ENCODE measurements at regions of chr3 and their contacts with region 1.

Region 1: DNA sequence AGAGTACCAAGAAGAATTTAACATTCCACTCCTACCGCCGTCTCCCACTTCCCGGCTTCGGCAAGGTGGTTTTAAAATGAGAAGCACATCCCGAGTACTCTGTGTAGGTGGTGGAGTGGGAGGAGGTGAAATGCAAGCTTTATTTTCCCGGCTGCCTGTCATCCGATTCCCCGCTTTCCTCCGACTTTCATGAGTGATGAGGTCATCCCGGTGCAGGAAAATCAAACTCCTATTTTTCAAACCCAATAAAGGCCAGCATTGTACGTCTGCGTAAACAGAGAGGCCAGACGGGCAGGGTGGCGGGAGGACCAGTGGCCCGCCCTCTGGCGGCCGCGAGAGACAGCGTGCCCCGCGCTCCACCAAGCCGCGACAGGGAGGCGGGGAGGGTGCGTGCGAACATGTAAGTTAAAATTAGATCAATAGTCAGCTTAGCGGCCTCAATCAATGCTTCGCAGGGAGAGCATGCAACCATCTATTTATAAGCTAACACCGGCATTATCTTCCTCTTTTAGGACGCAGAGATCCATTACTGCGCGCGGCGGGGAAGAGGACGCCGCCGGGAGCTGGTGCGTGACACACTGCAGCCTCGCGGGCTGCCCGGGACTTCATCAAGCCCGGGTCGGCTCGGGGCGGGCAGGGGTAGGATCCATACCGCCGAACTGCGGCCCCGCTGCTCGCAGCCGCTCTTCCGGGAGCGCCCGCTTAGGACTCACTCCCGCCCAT is 163.3 kb downstream of the CD47 start:
- H3K4me3 Mint-ChIP-seq: peak overlapping the region; percentile 81
- H3K27ac Mint-ChIP-seq: peak overlapping the region; percentile 81
- H3K4me1 Mint-ChIP-seq: peaks cover 16% of the 10 kb centered on the region
- H3K27me3 Mint-ChIP-seq: peaks cover 12% of the 10 kb centered on the region

Region 2: GRCh38 chr3:107753480-107753879 is 174.0 kb before region 1 on chr3:
- intact Hi-C with region 1: loop called (anchors 5 kb)
- H3K4me3 Mint-ChIP-seq: no peak overlapping the region
- H3K27ac Mint-ChIP-seq: no peak overlapping the region
- H3K4me1 Mint-ChIP-seq: no peaks in the 10 kb centered on the region
- H3K27me3 Mint-ChIP-seq: no peaks in the 10 kb centered on the region

Region 3: GRCh38 chr3:107884719-107885460 is 42.6 kb before region 1 on chr3:
- intact Hi-C with region 1: no loop called
- H3K4me3 Mint-ChIP-seq: no peak overlapping the region
- H3K27ac Mint-ChIP-seq: no peak overlapping the region
- H3K4me1 Mint-ChIP-seq: peaks cover 6% of the 10 kb centered on the region
- H3K27me3 Mint-ChIP-seq: no peaks in the 10 kb centered on the region

Region 4: DNA sequence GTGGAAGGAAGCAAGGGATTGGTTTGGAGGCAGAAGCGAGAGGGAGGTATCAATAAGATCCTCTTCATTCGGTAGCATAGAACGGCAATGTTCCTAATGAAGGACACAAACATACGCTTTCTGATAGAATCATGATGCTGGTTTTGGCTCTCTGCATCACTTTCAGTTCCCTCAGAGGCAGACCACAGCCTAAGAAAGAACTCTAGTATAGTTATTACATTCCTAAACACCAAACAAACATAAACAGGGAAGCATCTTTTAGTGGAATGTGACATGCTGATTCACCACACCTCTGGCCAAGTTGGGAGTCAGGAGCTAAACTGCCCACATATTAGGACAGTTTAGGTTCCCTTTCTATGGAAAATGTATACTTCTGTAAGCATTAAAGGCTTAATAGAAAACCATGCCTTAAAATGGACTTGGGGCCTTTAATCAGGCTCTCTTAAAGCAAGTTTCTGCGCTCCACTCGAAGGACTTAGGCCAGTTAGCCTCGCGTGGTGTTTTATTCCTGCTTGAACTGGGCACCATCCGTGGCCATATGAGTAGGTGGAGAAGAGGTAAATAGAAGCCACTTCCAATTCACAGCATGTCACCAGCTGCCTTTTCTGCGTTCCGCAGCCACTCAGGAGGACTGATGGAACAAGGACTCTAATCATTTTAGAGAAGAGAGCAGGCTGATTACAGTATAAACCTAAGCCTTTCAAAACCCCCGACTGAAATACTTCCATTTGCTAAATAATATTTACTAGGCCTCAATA is 109.6 kb after region 1 on chr3:
- intact Hi-C with region 1: loop called (anchors 5 kb)
- H3K4me3 Mint-ChIP-seq: no peak overlapping the region
- H3K27ac Mint-ChIP-seq: peak overlapping the region; percentile 86
- H3K4me1 Mint-ChIP-seq: peaks cover 66% of the 10 kb centered on the region
- H3K27me3 Mint-ChIP-seq: no peaks in the 10 kb centered on the region

Measured in dendritic cell treated with granulocyte-macrophage colony-stimulating factor and Interleukin-4, amounts not matched to agents 40 ng/mL and 50 ng/mL, for 4 days (primary cell).